Activated CD4-positive, alpha-beta T cell treated with anti-CD3 and anti-CD28 coated beads for 36 hours (primary cell): ENCODE measurements at regions of chr5 and their contacts with region 1.

Region 1: GRCh38 chr5:96629774-96630173 is 32.4 kb upstream of the CAST start:
- DNase-seq: no peak
- ATAC-seq: no peak
- H3K4me3 Mint-ChIP-seq: no peak overlapping the region
- H3K27ac Mint-ChIP-seq: no peak overlapping the region
- H3K4me1 Mint-ChIP-seq: peaks cover 5% of the 10 kb centered on the region
- H3K27me3 Mint-ChIP-seq: peaks cover 6% of the 10 kb centered on the region

Region 2: GRCh38 chr5:96548947-96549346 is 80.8 kb before region 1 on chr5:
- CTCF ChIA-PET with region 1: no interaction called
- POLR2A ChIA-PET with region 1: no interaction called
- intact Hi-C with region 1: no loop called
- DNase-seq: no peak
- ATAC-seq: no peak
- H3K4me3 Mint-ChIP-seq: no peak overlapping the region
- H3K27ac Mint-ChIP-seq: no peak overlapping the region
- H3K4me1 Mint-ChIP-seq: no peaks in the 10 kb centered on the region
- H3K27me3 Mint-ChIP-seq: peaks cover 6% of the 10 kb centered on the region

Region 3: DNA sequence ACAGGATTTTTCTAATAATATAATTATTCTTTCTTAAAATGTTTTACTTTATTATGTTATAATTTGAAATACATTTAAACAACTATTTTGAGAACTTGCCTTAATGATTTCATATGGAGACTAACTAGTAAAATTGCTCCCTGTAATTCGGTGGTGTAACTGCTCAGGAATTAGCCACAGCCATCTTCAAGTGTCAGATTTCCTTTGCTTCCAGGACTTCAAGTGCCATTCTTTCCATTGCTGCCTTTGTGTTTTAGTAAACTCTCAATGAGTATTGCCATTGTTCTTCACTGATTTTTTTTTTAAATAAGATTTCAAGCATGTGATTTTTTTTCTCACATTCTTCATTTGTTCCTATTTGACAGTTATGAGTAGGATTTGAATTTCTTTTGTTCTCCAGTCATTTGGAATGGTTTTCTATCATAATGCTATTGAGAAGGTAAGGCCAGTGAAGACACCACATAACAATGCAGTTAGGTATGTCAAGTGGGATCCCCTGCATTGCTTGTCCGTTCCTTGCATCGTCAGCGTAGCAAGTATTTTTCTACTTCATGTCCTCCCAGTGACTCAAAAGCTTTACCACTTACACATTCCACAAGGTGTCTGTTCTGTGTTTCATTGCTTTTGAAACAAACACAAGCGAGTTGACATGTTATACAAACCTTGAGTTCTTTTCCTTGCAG is 389.8 kb after region 1 on chr5:
- CTCF ChIA-PET with region 1: no interaction called
- POLR2A ChIA-PET with region 1: no interaction called
- intact Hi-C with region 1: loop called in 1 of 2 experiments (anchors 10 kb)
- DNase-seq: no peak
- ATAC-seq: no peak
- H3K4me3 Mint-ChIP-seq: no peak overlapping the region
- H3K27ac Mint-ChIP-seq: no peak overlapping the region
- H3K4me1 Mint-ChIP-seq: peaks cover 12% of the 10 kb centered on the region
- H3K27me3 Mint-ChIP-seq: no peaks in the 10 kb centered on the region